HEK293 (cell line): ENCODE measurements at regions of chr3 and their contacts with region 1.

Region 1: GRCh38 chr3:123559040-123559861 is 25.6 kb downstream of the HACD2 start:
- H3K4me3 ChIP-seq: no peak overlapping the region
- H3K27ac ChIP-seq: no peak overlapping the region
- H3K4me1 ChIP-seq: no peaks in the 10 kb centered on the region
- CTCF ChIP-seq: 0 out of 2 replicates have a peak, but pooled peaks have one; percentile 10

Region 2: DNA sequence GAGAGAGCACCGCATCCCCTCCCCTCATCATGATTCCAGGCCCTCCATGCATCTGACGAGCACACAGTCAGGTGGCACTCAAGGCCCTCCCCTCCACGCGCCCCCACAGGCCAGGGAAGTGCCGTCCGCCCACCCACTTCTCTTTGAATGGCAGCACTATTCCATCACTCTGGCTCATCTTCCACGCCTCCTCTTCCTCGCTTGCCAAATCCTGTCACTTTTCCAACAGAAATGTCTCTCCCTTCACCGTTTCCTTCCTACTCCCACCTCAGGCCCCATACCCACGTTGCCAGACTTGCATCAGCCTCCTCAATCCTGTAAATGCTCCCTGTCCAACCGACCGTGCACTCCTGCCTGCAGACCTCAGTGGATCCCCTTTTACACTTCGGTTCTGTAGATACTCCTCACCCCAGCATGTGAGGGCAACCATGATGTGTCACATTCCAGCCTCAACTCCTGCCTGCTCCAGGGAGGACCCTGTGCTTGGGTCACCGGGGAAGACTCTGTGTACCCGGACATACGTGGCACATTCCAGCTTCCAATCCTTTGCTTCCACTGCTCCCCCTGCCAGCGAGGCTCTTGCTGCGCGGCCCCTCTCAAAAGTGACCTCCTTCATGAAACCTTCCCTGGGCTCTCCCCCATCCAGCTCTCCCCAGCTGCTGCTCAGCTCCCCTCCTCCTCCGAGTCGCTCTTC is 139.9 kb before region 1 on chr3:
- CTCF ChIA-PET with region 1: no interaction called
- POLR2A ChIA-PET with region 1: no interaction called
- H3K4me3 ChIP-seq: no peak overlapping the region
- H3K27ac ChIP-seq: no peak overlapping the region
- H3K4me1 ChIP-seq: 0 out of 2 replicates have a peak, but pooled peaks cover 2% of the 10 kb centered on the region
- CTCF ChIP-seq: no peak

Region 3: DNA sequence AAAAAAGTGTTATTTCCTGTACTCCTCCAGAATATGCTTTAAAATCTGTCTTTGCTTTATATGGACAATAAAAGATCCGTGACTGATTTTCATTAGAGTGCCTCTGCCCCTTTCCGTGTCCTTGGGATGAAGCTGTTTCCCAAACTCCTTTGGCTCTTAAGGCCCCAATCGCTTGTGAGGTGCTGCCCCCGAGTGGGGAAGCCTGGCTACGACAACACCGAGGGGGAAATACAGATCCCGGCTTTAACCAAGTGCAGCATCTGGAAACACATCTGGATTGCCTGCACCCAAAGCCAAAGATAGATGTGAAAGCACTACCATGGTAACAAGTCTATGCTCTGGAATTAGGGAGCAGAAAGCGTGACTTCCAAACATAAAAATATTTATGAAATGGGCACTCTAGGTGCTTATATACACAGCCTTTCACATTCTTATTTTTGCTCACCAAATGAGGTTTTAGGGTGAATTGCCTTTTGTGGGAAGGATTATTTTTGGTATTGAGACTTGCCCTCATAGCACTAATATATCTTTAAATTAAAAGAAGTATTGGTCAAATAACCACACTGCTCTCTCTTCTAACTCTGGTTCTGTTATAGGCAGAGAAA is 69.7 kb before region 1 on chr3:
- CTCF ChIA-PET with region 1: interaction called, 11 read pairs
- POLR2A ChIA-PET with region 1: no interaction called
- H3K4me3 ChIP-seq: no peak overlapping the region
- H3K27ac ChIP-seq: no peak overlapping the region
- H3K4me1 ChIP-seq: no peaks in the 10 kb centered on the region
- CTCF ChIP-seq: peak; percentile 38; the same call in 1 of the 2 replicates

Region 4: DNA sequence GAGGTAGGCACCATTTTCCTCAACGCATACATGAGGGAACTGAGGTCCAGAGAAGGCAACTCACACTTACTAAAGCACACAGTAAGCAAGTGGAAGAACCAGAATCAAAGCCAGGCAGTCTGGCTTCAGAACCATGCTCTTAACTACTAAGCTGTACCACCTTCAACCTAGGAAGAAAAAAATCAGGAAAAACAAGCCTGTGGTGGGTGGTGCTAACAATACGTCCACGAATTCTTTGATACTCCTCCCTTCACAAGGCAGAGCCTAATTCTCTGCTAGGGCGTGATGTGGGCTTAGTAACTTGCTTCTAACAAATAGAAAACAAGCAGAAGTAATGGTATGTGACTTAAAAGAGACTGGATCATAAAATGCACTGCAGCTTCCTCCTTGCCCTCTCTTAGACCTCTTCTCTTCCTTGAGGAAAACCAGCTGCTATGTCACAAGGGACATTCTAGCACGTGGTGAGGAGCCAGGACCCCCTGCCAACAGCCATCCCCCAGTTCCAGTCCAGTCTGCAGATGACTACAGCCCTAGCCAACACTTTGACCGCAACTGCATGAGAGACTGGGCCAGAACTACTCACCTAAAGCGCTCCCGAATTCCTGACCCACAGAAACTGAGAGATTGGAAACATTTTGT is 11.3 kb before region 1 on chr3:
- CTCF ChIA-PET with region 1: interaction called, 12 read pairs
- POLR2A ChIA-PET with region 1: no interaction called
- H3K4me3 ChIP-seq: no peak overlapping the region
- H3K27ac ChIP-seq: no peak overlapping the region
- H3K4me1 ChIP-seq: no peaks in the 10 kb centered on the region
- CTCF ChIP-seq: no peak